ENCODE measurements at regions of chr2 and their contacts with region 1.

Region 1: GRCh38 chr2:37231241-37232130 is at the starts of genes CEBPZ and NDUFAF7:
- DNase-seq: peak; percentile 95
- H3K4me3 Mint-ChIP-seq: no peak within 1 kb of the TSS
- H3K27ac Mint-ChIP-seq: no peak within 1 kb of the TSS
- H3K4me1 Mint-ChIP-seq: peaks cover 36% of the 10 kb centered on the region
- H3K27me3 Mint-ChIP-seq: no peaks in the 10 kb centered on the region
- total RNA-seq, gene CEBPZ: 62.3 to 74.6 TPM
- total RNA-seq, gene NDUFAF7: 22.8 to 23.0 TPM

Region 2: DNA sequence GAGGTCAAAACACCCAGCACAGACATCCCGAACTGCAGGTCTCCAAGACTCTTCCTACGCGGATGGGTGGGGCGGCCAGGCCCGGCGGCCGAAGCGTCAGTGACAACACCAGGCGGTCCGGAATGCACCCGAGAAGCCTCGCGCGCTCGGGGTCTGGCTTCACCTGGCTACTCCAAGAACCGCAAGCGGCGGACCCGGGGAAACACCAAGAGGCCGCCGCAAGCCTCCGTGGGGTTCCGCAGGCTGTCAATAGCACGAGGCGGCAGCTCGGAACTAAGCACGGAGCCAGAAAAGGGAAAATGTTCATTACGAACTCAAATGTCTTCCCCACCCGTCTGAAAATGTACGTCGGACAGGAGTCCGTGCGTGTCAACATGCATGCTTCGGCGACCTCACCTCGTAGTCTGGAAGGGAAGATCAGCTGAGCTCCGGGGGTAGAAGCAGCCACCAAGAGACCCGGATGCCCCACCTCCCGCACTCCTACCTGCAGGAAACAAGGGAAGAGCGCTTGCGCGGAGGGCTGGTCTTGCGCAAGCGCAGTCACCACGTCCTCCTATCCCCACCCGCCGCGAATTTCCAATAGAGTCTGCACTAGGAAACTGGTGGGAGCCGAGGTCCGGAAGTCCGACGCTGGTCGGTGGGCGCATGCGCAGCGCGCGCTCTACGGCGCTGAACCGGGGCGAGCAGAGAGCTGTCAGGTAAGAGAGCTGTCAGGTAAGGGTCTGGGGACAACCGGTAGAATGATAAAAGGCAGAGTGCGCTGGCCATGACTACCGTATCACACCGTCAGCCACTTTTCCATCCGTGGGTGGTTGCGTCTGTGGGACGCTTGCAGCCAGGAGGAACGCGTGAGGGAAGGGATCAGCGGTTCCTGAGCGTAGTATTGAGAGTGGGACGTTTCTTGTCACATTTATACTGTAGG is 147.4 kb before region 1 on chr2 and contains the starts of genes GPATCH11 and HEATR5B:
- CTCF ChIA-PET with region 1: no interaction called
- POLR2A ChIA-PET with region 1: interaction called, 5 read pairs
- intact Hi-C with region 1: loop called (anchors 2 kb)
- DNase-seq: peak; percentile 96
- H3K4me3 Mint-ChIP-seq: no peak within 1 kb of the TSS
- H3K27ac Mint-ChIP-seq: no peak within 1 kb of the TSS
- H3K4me1 Mint-ChIP-seq: peaks cover 36% of the 10 kb centered on the region
- H3K27me3 Mint-ChIP-seq: no peaks in the 10 kb centered on the region
- total RNA-seq, gene GPATCH11: 12.6 to 13.0 TPM
- total RNA-seq, gene HEATR5B: 18.1 to 20.3 TPM

Region 3: DNA sequence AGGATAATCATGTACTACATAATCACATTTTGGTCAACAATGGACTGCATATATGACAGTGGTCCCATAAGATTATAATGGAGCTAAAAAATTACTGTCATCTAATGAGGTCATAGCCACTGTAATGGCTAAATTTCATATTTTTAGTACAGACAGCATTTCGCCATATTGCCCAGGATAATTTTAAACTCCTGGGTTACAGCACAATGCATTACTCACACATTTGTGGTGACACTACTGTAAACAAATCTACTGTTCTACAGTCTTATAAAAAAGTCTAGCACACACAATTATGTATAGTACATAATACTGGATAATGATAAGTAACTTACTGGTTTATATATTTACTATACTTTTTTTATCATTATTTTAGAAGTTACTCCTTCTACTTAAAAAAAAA is 87.5 kb before region 1 on chr2:
- CTCF ChIA-PET with region 1: no interaction called
- POLR2A ChIA-PET with region 1: no interaction called
- intact Hi-C with region 1: no loop called
- DNase-seq: no peak
- H3K4me3 Mint-ChIP-seq: no peak overlapping the region
- H3K27ac Mint-ChIP-seq: no peak overlapping the region
- H3K4me1 Mint-ChIP-seq: peaks cover 7% of the 10 kb centered on the region
- H3K27me3 Mint-ChIP-seq: no peaks in the 10 kb centered on the region

Region 4: DNA sequence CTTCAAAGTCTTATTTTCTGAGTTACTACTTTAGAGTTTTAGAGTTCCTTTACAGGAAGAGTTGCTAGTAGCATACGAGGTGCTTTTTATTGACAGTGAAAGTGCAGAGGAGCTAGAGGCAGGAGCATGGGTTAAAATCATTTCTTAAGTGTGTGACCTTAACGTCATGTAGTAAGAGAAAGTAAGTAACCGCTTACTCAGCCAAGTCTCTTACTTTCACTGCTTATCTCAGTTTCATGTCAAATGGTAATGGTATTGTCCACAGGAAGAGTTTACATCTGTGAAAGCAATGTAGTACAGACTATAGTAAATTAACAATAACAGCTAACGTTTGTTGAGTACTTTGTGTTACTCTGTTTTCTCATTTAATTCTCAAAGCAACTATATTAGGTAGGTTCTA is 12.5 kb after region 1 on chr2:
- CTCF ChIA-PET with region 1: no interaction called
- POLR2A ChIA-PET with region 1: interaction called, 14 read pairs
- intact Hi-C with region 1: loop called (anchors 1 kb)
- DNase-seq: no peak
- H3K4me3 Mint-ChIP-seq: no peak overlapping the region
- H3K27ac Mint-ChIP-seq: peak overlapping the region; percentile 14
- H3K4me1 Mint-ChIP-seq: peaks cover 24% of the 10 kb centered on the region
- H3K27me3 Mint-ChIP-seq: no peaks in the 10 kb centered on the region

Region 5: DNA sequence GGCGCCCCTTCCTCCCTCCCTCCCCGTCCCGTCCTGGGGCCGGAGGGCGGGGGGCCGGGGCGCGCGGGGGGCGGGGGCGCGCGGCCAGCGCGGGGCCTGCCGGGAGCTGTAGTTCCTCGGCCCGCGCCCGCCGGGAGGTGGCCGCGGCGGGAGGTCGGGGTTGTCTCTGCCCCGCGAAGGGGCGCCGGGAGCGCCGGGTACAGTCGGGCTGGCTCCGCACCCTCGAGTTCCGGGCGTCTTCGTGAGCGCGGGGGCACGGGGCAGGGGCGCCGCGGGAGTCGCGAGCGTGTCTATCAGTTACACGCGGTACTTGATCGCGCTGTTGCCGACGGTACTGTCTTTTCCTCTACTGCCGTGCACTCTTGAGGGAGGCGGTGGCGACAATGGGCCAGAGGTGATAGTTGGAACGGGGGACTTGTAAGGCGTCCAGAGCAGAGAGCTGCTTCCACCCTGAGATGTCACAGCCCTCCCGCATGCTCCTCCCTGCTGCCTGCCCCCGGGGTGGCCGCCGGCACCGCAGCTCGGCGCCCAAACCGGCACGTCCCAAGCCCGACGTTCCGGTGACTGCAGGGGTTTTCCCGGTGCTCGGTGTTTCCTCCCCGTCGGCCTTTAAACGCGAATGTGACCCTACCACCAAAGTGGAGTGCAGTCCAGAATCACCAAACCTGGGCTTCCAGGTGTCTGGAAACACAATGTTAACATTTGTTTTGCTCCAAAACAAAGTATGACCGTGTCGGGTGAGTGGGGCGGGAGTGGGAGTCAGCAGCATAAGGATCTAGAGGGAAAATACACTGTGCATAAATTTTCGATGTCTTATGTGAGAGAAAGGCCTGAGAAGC is 93.5 kb after region 1 on chr2 and contains the start of gene PRKD3:
- CTCF ChIA-PET with region 1: no interaction called
- POLR2A ChIA-PET with region 1: interaction called, 5 read pairs
- intact Hi-C with region 1: loop called (anchors 2 kb)
- DNase-seq: peak; percentile 77
- H3K4me3 Mint-ChIP-seq: peak within 1 kb of the TSS; percentile 94
- H3K27ac Mint-ChIP-seq: peak within 1 kb of the TSS; percentile 89
- H3K4me1 Mint-ChIP-seq: peaks cover 37% of the 10 kb centered on the region
- H3K27me3 Mint-ChIP-seq: peaks cover 16% of the 10 kb centered on the region
- total RNA-seq, gene PRKD3: 22.5 to 24.7 TPM

Measured in activated CD4-positive, alpha-beta memory T cell treated with anti-CD3 and anti-CD28 coated beads for 36 hours (primary cell).